ENCODE measurements at regions of chr15 and their contacts with region 1.

Region 1: DNA sequence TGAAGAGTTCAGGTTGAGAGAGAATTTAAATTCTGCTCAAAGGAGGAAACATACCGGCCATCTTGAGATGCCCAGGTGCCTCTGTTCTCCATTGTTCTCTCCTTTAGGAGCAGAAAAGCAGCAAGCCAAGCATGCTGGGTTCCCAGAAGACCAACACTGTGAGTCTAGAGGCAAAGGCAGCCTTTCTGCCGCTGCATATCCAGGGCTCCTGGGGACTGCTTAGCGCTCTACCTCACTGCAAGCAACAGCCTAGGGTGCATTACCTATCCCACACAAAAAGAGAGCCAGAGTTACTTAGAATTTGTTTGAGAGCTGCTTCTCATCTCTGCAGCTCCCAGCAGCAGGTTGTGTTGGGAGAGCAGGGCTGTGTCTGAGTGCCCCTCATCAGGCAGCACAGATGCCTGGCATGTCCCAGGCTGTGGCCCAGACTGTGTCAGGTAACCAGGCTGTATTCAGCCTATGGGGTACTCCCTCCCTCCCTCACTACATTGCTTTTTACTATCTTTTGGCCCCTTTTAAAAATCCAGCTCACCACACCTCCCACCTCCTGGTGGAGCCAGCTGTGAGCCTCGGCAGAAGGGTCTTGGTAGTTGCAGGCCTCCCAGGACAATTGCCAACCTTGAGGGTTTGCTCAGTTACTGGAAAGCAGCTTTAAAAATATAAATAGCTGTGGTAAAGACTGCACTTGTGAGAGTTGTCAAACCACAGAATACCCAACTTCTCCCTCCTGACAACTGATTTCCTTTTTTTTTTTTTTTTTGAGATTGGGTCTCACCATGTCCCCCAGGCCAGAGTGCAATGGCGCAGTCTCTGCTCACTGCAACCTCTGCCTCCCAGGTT is 30.2 kb downstream of the BCL2L10 start:
- DNase-seq: no peak
- ATAC-seq: peak; percentile 13
- H3K4me3 ChIP-seq: no peak overlapping the region
- H3K4me1 ChIP-seq: peaks cover 6% of the 10 kb centered on the region
- CTCF ChIP-seq: no peak

Region 2: DNA sequence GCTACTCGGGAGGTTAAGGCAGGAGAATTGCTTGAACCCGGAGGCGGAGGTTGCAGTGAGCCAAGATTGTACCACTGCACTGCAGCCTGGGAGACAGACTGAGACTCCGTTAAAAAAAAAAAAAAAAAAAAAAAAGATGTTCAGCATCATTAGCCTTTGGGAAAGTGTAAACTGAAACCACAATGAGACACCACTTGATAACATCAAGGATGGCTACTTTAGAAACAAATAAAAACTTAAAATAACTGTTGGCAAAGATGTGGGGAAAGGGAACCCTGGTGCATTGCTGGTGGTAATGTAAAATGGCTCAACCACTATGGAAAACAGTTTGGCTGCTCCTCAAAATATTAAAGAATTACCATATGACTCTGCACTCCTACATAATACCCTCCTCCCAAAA is 112.7 kb before region 1 on chr15:
- intact Hi-C with region 1: loop called in 1 of 2 experiments (anchors 10 kb)
- DNase-seq: no peak
- ATAC-seq: no peak
- H3K4me3 ChIP-seq: no peak overlapping the region
- H3K4me1 ChIP-seq: peaks cover 8% of the 10 kb centered on the region
- CTCF ChIP-seq: no peak

Measured in mucosa of descending colon (tissue), 3 donors.